Activated naive CD4-positive, alpha-beta T cell treated with anti-CD3 and anti-CD28 coated beads for 36 hours (primary cell): ENCODE measurements at regions of chr12 and their contacts with region 1.

Region 1: GRCh38 chr12:24838531-24838950 is 110.4 kb downstream of the BCAT1 start:
- DNase-seq: peak; percentile 45
- H3K4me3 Mint-ChIP-seq: no peak overlapping the region
- H3K27ac Mint-ChIP-seq: peak overlapping the region; percentile 83
- H3K4me1 Mint-ChIP-seq: peaks cover 32% of the 10 kb centered on the region
- H3K27me3 Mint-ChIP-seq: peaks cover 11% of the 10 kb centered on the region

Region 2: GRCh38 chr12:22856178-22856577 is 1982.4 kb before region 1 on chr12:
- CTCF ChIA-PET with region 1: interaction called, 3 read pairs
- intact Hi-C with region 1: loop called (anchors 1 kb)
- DNase-seq: no peak
- H3K4me3 Mint-ChIP-seq: no peak overlapping the region
- H3K27ac Mint-ChIP-seq: no peak overlapping the region
- H3K4me1 Mint-ChIP-seq: no peaks in the 10 kb centered on the region
- H3K27me3 Mint-ChIP-seq: peaks cover 15% of the 10 kb centered on the region

Region 3: DNA sequence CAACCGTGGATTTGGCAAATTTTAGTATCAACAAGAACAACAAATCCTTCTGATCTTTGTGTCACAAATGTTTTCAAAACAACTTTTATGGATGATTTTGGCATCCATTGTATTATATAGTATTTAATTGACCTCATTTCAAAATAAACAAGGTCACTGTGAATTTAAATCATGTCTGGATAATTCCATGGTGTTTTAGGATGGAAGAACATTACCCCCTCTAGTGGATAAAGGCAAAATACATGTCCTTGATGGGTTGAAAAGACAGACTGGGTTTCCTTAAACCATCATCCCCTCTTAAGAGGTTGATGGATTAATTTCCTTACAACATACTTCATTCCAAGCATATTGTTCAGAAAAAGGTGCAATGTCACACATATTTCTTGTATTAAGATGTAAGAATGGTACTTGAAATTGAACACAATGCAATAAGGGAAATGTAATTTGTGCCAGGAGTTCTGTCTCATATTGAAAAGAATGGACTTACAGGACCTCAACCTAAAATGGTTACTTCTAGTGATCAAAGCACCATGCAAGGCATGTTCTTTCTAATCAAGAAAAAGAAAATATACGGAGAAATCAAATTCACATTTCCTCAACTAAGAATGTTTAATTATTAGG is 241.7 kb before region 1 on chr12:
- CTCF ChIA-PET with region 1: no interaction called
- intact Hi-C with region 1: loop called (anchors 1 kb)
- DNase-seq: no peak
- H3K4me3 Mint-ChIP-seq: no peak overlapping the region
- H3K27ac Mint-ChIP-seq: no peak overlapping the region
- H3K4me1 Mint-ChIP-seq: peaks cover 2% of the 10 kb centered on the region
- H3K27me3 Mint-ChIP-seq: peaks cover 7% of the 10 kb centered on the region

Region 4: GRCh38 chr12:24778486-24779304 is 59.8 kb before region 1 on chr12:
- CTCF ChIA-PET with region 1: interaction called, 3 read pairs
- intact Hi-C with region 1: loop called (anchors 2 kb)
- DNase-seq: no peak
- H3K4me3 Mint-ChIP-seq: no peak overlapping the region
- H3K27ac Mint-ChIP-seq: no peak overlapping the region
- H3K4me1 Mint-ChIP-seq: no peaks in the 10 kb centered on the region
- H3K27me3 Mint-ChIP-seq: peaks cover 13% of the 10 kb centered on the region

Region 5: GRCh38 chr12:24902511-24903328 is 64.2 kb after region 1 on chr12:
- CTCF ChIA-PET with region 1: interaction called, 3 read pairs
- intact Hi-C with region 1: loop called (anchors 1 kb)
- DNase-seq: peak; percentile 23
- H3K4me3 Mint-ChIP-seq: peak overlapping the region; percentile 85
- H3K27ac Mint-ChIP-seq: peak overlapping the region; percentile 71
- H3K4me1 Mint-ChIP-seq: peaks cover 31% of the 10 kb centered on the region
- H3K27me3 Mint-ChIP-seq: peaks cover 28% of the 10 kb centered on the region

Region 6: DNA sequence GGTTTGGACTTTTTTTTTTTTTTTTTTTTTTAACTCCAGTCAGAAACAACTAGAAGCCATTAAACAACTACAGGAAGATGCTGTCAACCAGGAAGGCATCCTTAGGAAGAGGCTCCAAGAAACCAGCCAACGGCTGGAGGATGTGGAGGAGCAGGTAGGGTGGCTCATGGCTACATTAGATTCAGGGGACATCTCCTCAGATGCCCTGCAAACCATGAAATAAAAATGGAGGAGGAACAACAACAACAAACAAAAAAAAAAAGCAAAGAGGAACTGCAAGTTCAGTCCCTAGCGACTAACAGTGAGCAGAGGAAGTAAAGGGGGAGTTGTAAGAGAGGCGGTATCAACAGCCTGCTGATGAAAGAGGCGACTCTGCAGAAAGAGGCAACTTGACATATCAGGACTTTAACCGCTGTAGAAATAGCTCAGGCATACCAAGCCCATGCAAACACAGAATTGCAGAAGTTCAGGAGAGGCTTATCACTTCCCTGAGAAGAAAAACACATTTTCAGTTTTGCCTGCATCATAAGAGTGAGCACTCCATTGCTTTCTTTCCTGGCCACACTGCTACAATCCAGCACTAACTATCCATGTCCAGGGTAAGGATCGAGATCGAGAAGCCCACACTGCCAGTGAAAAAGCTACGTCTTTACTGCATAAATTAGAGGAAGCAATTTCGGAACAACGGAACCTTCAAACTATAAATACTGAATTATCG is 213.8 kb after region 1 on chr12:
- CTCF ChIA-PET with region 1: no interaction called
- intact Hi-C with region 1: loop called (anchors 1 kb)
- DNase-seq: peak; percentile 62
- H3K4me3 Mint-ChIP-seq: peak overlapping the region; percentile 89
- H3K27ac Mint-ChIP-seq: peak overlapping the region; percentile 99
- H3K4me1 Mint-ChIP-seq: peaks cover 32% of the 10 kb centered on the region
- H3K27me3 Mint-ChIP-seq: no peaks in the 10 kb centered on the region